Panc1 (cell line): ENCODE measurements at regions of chr1 and their contacts with region 1.

Region 1: GRCh38 chr1:183792300-183792699 is 12.6 kb upstream of the RGL1 start:
- DNase-seq: no peak
- ATAC-seq: no peak
- H3K4me3 ChIP-seq: no peak overlapping the region
- H3K27ac ChIP-seq: no peak overlapping the region
- H3K4me1 ChIP-seq: no peaks in the 10 kb centered on the region
- H3K27me3 ChIP-seq: no peaks in the 10 kb centered on the region
- CTCF ChIP-seq: no peak

Region 2: GRCh38 chr1:183023601-183024316 is 768.5 kb before region 1 on chr1:
- CTCF ChIA-PET with region 1: no interaction called
- POLR2A ChIA-PET with region 1: interaction called, 19 read pairs
- in situ Hi-C with region 1: no loop called
- intact Hi-C with region 1: no loop called
- DNase-seq: no peak
- ATAC-seq: peak; percentile 87
- H3K4me3 ChIP-seq: peak overlapping the region; percentile 61 to 83
- H3K27ac ChIP-seq: peak overlapping the region; percentile 81
- H3K4me1 ChIP-seq: peaks cover 53% of the 10 kb centered on the region
- H3K27me3 ChIP-seq: no peaks in the 10 kb centered on the region
- CTCF ChIP-seq: peak; percentile 80

Region 3: GRCh38 chr1:184504040-184504954 is 712.0 kb after region 1 on chr1:
- CTCF ChIA-PET with region 1: no interaction called
- POLR2A ChIA-PET with region 1: no interaction called
- in situ Hi-C with region 1: no loop called
- intact Hi-C with region 1: no loop called
- DNase-seq: no peak
- ATAC-seq: no peak
- H3K4me3 ChIP-seq: no peak overlapping the region
- H3K27ac ChIP-seq: no peak overlapping the region
- H3K4me1 ChIP-seq: no peaks in the 10 kb centered on the region
- H3K27me3 ChIP-seq: no peaks in the 10 kb centered on the region
- CTCF ChIP-seq: no peak